AG04450 (cell line): ENCODE measurements at regions of chr6 and their contacts with region 1.

Region 1: DNA sequence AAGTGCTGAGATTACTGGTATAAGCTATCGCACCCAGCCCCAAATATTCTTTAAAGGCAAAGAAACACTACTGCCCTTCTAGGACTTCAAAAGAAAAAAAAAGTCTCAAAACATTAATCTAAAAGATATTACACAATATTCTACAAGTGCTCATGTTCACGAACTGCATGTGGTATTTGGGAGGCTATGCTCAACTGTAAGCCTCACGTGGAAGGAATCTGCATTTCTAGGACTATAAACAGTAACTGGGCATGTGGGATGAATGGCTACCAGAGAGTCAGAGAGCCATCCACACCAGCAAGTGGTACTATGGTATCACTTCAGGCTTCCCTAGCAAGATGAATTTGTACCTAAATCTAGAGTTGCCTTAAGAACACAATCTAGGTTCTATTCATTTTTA is 50.0 kb downstream of the FKBP5 start:
- DNase-seq: no peak
- H3K4me3 ChIP-seq: no peak overlapping the region
- H3K27ac ChIP-seq: no peak overlapping the region
- H3K27me3 ChIP-seq: no peaks in the 10 kb centered on the region
- CTCF ChIP-seq: no peak

Region 2: GRCh38 chr6:34568802-34569201 is 1069.9 kb before region 1 on chr6:
- CTCF ChIA-PET with region 1: no interaction called
- POLR2A ChIA-PET with region 1: interaction called, 11 read pairs
- DNase-seq: no peak
- H3K4me3 ChIP-seq: no peak overlapping the region
- H3K27ac ChIP-seq: peak overlapping the region; percentile 21
- H3K27me3 ChIP-seq: peaks cover 12% of the 10 kb centered on the region
- CTCF ChIP-seq: no peak

Region 3: GRCh38 chr6:35624341-35625070 is 14.2 kb before region 1 on chr6:
- CTCF ChIA-PET with region 1: interaction called, 12 read pairs
- POLR2A ChIA-PET with region 1: no interaction called
- DNase-seq: no peak
- H3K4me3 ChIP-seq: no peak overlapping the region
- H3K27ac ChIP-seq: no peak overlapping the region
- H3K27me3 ChIP-seq: no peaks in the 10 kb centered on the region
- CTCF ChIP-seq: peak; percentile 48